Activated B cell treated with CpG ODN at 0.5 μM for 24 hours (primary cell): ENCODE measurements at regions of chr1 and their contacts with region 1.

Region 1: DNA sequence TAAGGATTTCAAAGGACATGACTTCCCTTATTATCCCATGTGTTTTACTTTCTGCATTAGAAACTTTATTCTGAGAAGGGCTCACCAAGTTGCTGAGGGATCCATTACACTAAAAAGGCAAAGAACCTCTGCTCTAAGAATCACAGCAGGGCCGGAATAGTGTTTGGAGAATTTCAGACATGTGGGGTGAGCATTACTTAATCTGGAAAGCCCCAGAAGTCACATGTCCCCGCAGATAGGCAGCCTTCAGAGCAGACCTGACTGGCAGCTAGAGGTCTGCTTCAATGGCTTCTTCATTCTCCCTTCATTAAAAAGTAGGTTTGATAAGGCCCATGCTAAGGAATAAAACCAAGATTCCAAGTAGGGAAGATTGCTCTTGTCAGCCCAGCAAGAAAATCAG is 52.6 kb upstream of the RBM15 start:
- DNase-seq: no peak
- ATAC-seq: no peak
- H3K4me3 Mint-ChIP-seq: no peak overlapping the region
- H3K27ac Mint-ChIP-seq: no peak overlapping the region
- H3K4me1 Mint-ChIP-seq: no peaks in the 10 kb centered on the region
- H3K27me3 Mint-ChIP-seq: no peaks in the 10 kb centered on the region
- CTCF ChIP-seq: no peak

Region 2: GRCh38 chr1:110243574-110243973 is 43.0 kb before region 1 on chr1:
- CTCF ChIA-PET with region 1: no interaction called
- POLR2A ChIA-PET with region 1: no interaction called
- intact Hi-C with region 1: loop called (anchors 5 kb)
- DNase-seq: peak; percentile 30
- ATAC-seq: peak; percentile 89
- H3K4me3 Mint-ChIP-seq: peak overlapping the region; percentile 71
- H3K27ac Mint-ChIP-seq: peak overlapping the region; percentile 73
- H3K4me1 Mint-ChIP-seq: peaks cover 37% of the 10 kb centered on the region
- H3K27me3 Mint-ChIP-seq: no peaks in the 10 kb centered on the region
- CTCF ChIP-seq: no peak

Region 3: GRCh38 chr1:110272045-110272444 is 14.5 kb before region 1 on chr1:
- CTCF ChIA-PET with region 1: no interaction called
- POLR2A ChIA-PET with region 1: no interaction called
- intact Hi-C with region 1: no loop called
- DNase-seq: no peak
- ATAC-seq: no peak
- H3K4me3 Mint-ChIP-seq: no peak overlapping the region
- H3K27ac Mint-ChIP-seq: no peak overlapping the region
- H3K4me1 Mint-ChIP-seq: no peaks in the 10 kb centered on the region
- H3K27me3 Mint-ChIP-seq: no peaks in the 10 kb centered on the region
- CTCF ChIP-seq: no peak